ENCODE measurements at regions of chr14 and their contacts with region 1.

Region 1: DNA sequence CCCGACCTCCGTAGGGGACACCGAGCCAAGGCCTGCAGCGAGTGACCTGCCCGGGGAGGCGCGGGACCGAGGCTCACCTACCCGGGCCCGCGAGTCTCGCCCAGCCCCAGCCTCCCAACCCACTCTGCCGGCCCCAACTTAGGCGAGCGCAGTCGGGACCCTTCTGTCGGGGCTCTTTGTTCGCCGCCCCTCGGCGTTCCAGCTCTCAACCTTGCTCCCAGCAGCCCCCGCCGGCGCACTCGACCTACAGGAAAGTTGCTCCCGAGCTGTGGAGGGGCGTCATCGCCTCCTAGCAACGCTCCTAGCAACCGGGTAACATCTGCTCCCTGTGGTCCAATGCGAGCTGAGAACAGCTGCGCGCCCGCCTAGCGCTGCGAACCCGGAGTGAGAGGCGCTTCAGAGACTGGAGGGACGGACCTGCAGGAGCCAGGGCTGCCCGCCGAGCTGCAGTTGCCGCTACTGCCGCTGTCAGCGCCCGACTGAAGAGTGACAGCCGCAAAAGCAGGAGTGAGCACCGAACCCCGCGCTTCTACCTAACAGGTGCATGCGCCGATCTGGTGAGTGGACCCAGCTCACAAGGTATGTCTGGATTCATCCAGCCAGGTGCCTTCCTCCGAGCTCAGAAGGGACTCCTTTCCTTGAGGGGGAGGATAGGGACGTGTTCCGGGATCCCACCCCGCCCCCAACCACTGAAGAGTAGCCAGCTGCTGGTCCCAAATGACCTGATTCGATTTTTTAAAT is 355.0 kb downstream of the SNAPC1 start:
- DNase-seq: peak; percentile 73
- H3K4me3 Mint-ChIP-seq: peak overlapping the region; percentile 36
- H3K27ac Mint-ChIP-seq: no peak overlapping the region
- H3K4me1 Mint-ChIP-seq: peaks cover 5% of the 10 kb centered on the region
- H3K27me3 Mint-ChIP-seq: peaks cover 53% of the 10 kb centered on the region

Region 2: GRCh38 chr14:61537563-61538463 is 579.4 kb before region 1 on chr14:
- CTCF ChIA-PET with region 1: no interaction called
- POLR2A ChIA-PET with region 1: no interaction called
- intact Hi-C with region 1: loop called (anchors 5 kb)
- DNase-seq: peak; percentile 71
- H3K4me3 Mint-ChIP-seq: peak overlapping the region; percentile 1
- H3K27ac Mint-ChIP-seq: peak overlapping the region; percentile 77
- H3K4me1 Mint-ChIP-seq: peaks cover 81% of the 10 kb centered on the region
- H3K27me3 Mint-ChIP-seq: no peaks in the 10 kb centered on the region

Region 3: GRCh38 chr14:62029569-62029924 is 87.6 kb before region 1 on chr14:
- CTCF ChIA-PET with region 1: no interaction called
- POLR2A ChIA-PET with region 1: no interaction called
- intact Hi-C with region 1: no loop called
- DNase-seq: no peak
- H3K4me3 Mint-ChIP-seq: no peak overlapping the region
- H3K27ac Mint-ChIP-seq: no peak overlapping the region
- H3K4me1 Mint-ChIP-seq: no peaks in the 10 kb centered on the region
- H3K27me3 Mint-ChIP-seq: peaks cover 13% of the 10 kb centered on the region

Region 4: DNA sequence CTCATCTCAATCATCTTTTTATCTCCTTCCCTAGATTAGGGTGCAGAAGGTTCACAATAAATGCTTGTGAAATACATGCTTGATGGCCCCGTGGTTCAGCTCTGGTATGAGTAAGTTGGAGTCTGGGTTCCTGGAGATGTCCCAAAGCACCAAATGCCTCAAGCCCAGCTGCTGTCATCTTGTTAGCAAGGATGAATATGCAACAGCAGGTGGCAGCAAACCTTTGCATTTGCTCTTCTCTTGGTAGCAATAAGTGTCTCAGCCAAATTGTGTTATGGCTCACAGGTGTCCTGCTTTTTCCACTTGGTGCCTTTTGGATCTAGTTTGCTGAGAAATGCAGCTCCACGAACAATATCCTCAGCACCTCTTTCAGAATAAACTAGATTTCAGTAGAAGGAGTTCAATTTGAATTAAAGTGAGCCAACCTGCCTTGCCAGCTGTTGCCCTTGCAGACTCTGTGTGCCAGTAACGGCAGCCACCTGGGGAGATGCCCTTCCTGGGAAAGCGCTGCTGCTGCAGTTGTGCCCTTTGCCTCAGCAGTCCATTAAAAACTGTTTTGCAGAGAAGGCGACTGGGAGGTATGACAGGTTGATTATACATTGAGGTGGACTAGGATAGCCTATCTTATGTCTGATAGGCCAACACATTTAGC is 62.3 kb after region 1 on chr14:
- CTCF ChIA-PET with region 1: no interaction called
- POLR2A ChIA-PET with region 1: no interaction called
- intact Hi-C with region 1: no loop called
- DNase-seq: peak; percentile 41
- H3K4me3 Mint-ChIP-seq: no peak overlapping the region
- H3K27ac Mint-ChIP-seq: no peak overlapping the region
- H3K4me1 Mint-ChIP-seq: no peaks in the 10 kb centered on the region
- H3K27me3 Mint-ChIP-seq: peaks cover 7% of the 10 kb centered on the region

Measured in activated CD4-positive, alpha-beta memory T cell treated with anti-CD3 and anti-CD28 coated beads for 36 hours (primary cell).